Activated naive CD4-positive, alpha-beta T cell treated with anti-CD3 and anti-CD28 coated beads for 36 hours (primary cell): ENCODE measurements at regions of chr2 and their contacts with region 1.

Region 1: GRCh38 chr2:170815746-170816503 is 762 bp upstream of the GAD1 start:
- DNase-seq: peak; percentile 77
- H3K4me3 Mint-ChIP-seq: peak overlapping the region; percentile 68
- H3K27ac Mint-ChIP-seq: no peak overlapping the region
- H3K4me1 Mint-ChIP-seq: peaks cover 43% of the 10 kb centered on the region
- H3K27me3 Mint-ChIP-seq: peaks cover 72% of the 10 kb centered on the region

Region 2: DNA sequence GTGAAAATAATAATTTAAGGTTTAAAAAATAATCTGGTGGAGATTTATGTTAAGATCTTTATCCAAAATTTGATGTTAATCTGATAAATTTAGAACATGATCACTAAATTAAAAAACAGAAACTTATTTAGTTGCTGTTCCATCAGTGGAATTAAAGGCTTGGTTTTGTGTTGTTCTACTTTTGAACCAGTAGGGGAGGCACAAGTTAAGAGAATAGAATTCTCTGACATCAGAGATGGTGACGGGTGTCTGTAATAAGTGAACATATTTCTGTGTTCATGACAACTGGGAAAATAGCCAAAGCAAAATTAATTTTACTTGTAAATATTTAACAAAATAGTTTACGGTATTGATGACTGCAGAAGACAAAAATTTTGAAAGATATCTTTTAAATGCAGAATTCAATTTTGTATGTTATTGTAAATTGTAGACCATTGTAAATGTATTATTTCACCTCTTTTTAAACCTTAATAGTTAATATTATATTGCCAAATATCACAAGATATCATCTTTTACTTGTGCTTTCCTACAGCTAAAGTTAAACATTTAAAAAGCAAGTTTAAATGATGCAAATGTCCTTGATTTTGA is 882.7 kb before region 1 on chr2:
- CTCF ChIA-PET with region 1: no interaction called
- intact Hi-C with region 1: loop called (anchors 2 kb)
- DNase-seq: no peak
- H3K4me3 Mint-ChIP-seq: no peak overlapping the region
- H3K27ac Mint-ChIP-seq: no peak overlapping the region
- H3K4me1 Mint-ChIP-seq: no peaks in the 10 kb centered on the region
- H3K27me3 Mint-ChIP-seq: no peaks in the 10 kb centered on the region

Region 3: GRCh38 chr2:170324640-170325046 is 491.3 kb before region 1 on chr2:
- CTCF ChIA-PET with region 1: interaction called, 19 read pairs
- intact Hi-C with region 1: loop called (anchors 1 kb)
- DNase-seq: peak; percentile 53
- H3K4me3 Mint-ChIP-seq: no peak overlapping the region
- H3K27ac Mint-ChIP-seq: no peak overlapping the region
- H3K4me1 Mint-ChIP-seq: no peaks in the 10 kb centered on the region
- H3K27me3 Mint-ChIP-seq: no peaks in the 10 kb centered on the region

Region 4: GRCh38 chr2:170369894-170370293 is 446.0 kb before region 1 on chr2:
- CTCF ChIA-PET with region 1: interaction called, 45 read pairs
- intact Hi-C with region 1: loop called (anchors 1 kb)
- DNase-seq: no peak
- H3K4me3 Mint-ChIP-seq: no peak overlapping the region
- H3K27ac Mint-ChIP-seq: no peak overlapping the region
- H3K4me1 Mint-ChIP-seq: peaks cover 29% of the 10 kb centered on the region
- H3K27me3 Mint-ChIP-seq: peaks cover 25% of the 10 kb centered on the region

Region 5: GRCh38 chr2:170409164-170409535 is 406.8 kb before region 1 on chr2:
- CTCF ChIA-PET with region 1: interaction called, 31 read pairs
- intact Hi-C with region 1: loop called (anchors 1 kb)
- DNase-seq: peak; percentile 88
- H3K4me3 Mint-ChIP-seq: peak overlapping the region; percentile 44
- H3K27ac Mint-ChIP-seq: no peak overlapping the region
- H3K4me1 Mint-ChIP-seq: peaks cover 7% of the 10 kb centered on the region
- H3K27me3 Mint-ChIP-seq: peaks cover 26% of the 10 kb centered on the region

Region 6: GRCh38 chr2:170486730-170487129 is 329.2 kb before region 1 on chr2:
- CTCF ChIA-PET with region 1: interaction called, 5 read pairs
- intact Hi-C with region 1: loop called (anchors 5 kb)
- DNase-seq: no peak
- H3K4me3 Mint-ChIP-seq: no peak overlapping the region
- H3K27ac Mint-ChIP-seq: no peak overlapping the region
- H3K4me1 Mint-ChIP-seq: no peaks in the 10 kb centered on the region
- H3K27me3 Mint-ChIP-seq: no peaks in the 10 kb centered on the region

Region 7: GRCh38 chr2:170736628-170737027 is 79.3 kb before region 1 on chr2:
- CTCF ChIA-PET with region 1: interaction called, 5 read pairs
- intact Hi-C with region 1: loop called (anchors 2 kb)
- DNase-seq: no peak
- H3K4me3 Mint-ChIP-seq: no peak overlapping the region
- H3K27ac Mint-ChIP-seq: no peak overlapping the region
- H3K4me1 Mint-ChIP-seq: no peaks in the 10 kb centered on the region
- H3K27me3 Mint-ChIP-seq: peaks cover 4% of the 10 kb centered on the region